ENCODE measurements at regions of chr19 and their contacts with region 1.

Region 1: DNA sequence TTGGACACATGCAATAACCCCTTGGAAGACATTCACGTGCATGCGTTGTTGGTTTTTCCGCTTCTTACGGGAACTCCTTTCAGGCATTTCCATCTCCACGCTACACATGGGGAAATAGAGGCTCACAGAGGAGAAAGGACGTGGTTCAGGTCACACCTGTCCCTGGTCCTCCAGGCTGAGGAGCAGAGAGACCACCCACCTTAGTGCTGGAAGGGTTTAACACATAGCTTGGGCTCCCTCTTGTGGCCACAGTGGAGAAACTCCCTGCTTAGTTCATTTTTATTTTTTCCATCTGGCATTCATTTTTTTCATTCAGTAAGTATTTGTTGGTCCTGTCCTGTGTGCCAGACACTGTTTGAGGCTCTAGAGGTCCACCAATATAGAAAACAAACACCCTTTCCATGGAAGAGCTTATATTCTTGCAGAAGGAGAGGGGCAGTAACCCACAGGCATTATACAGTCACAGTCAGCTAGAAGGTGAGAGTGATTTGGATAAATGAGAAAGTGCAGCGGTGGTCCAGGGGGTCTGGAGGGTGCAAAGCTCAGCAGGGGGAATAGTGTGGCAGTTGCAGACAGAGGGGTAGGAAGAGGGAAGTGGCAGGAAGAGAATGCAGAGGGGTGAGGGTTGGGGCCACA is 24.2 kb upstream of the TTYH1 start:
- DNase-seq: no peak
- ATAC-seq: peak; percentile 31
- H3K4me3 ChIP-seq: no peak overlapping the region
- H3K27ac ChIP-seq: no peak overlapping the region
- H3K4me1 ChIP-seq: peaks cover 9% of the 10 kb centered on the region
- H3K27me3 ChIP-seq: no peaks in the 10 kb centered on the region
- CTCF ChIP-seq: peak; percentile 66 to 73 (median 72)
- EP300 ChIP-seq: no peak
- POLR2A ChIP-seq: no peak
- RAD21 ChIP-seq: peak; percentile 74

Region 2: DNA sequence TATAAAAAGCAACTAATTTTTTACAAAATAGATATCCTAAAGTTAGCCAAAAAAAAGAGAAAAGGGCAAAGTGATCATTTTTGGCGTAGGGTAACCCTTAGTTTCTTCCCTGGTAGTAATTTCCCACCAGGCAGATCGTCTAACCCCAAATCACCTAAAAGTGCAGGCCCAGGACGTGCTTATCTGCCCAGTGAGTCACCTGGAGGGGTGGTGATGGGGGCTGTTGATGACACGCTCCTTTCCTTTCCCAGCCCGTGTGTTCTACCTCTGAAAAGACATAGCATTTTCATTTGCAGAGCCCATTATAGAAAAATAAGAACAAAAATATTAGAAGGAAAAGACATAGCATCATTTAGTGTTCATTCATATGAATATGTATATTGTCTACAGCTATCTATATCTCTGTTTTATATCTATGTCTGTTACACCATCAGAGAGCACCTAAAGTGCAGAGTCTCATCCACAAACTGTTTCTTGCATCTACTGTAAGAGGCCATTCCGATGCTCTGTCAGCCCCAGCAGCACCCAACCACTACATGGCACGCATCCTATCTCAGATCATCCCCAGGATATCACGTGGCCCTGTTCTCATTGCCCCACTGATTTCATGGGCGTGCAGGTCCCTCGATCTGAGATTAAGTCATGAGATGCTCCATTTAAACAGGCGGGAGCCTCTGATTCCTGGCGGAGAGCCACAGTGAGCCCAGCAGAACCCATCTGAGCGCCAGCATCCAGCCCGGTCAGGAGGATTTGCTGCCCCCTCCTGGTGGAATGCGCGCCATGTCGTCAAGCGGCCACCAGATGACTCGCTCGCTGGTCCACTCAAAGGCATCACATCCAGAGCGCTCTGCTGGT is 159.8 kb before region 1 on chr19:
- CTCF ChIA-PET with region 1: interaction called, 11 read pairs
- POLR2A ChIA-PET with region 1: no interaction called
- RAD21 ChIA-PET with region 1: no interaction called
- SMC1A ChIA-PET with region 1: interaction called, 3 read pairs
- in situ Hi-C with region 1: no loop called
- intact Hi-C with region 1: loop called (anchors 2 kb)
- DNase-seq: no peak
- ATAC-seq: peak; percentile 100
- H3K4me3 ChIP-seq: no peak overlapping the region
- H3K27ac ChIP-seq: no peak overlapping the region
- H3K4me1 ChIP-seq: no peaks in the 10 kb centered on the region
- H3K27me3 ChIP-seq: no peaks in the 10 kb centered on the region
- CTCF ChIP-seq: peak; percentile 99; a peak in 5 of 6 replicates
- EP300 ChIP-seq: no peak
- POLR2A ChIP-seq: no peak
- RAD21 ChIP-seq: peak; percentile 91

Region 3: DNA sequence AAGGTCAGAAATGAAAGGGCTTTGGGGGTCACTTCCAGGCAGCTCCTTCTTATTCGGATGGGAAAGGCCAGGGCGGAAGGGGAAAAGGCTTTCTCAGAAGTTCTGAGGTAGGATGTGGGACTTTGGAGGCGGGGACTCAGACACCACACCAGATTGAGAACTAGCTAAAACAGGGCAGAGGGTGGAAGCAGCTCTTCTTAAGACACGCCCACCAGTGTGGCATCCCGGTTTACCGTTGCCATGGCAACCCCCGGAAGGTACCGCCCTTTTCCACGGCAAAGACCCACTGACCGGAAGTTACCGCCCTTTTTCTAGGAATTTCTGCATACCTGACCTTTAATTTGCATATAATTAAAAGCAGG is 74.3 kb before region 1 on chr19:
- CTCF ChIA-PET with region 1: interaction called, 40 read pairs
- POLR2A ChIA-PET with region 1: no interaction called
- RAD21 ChIA-PET with region 1: interaction called, 3 read pairs
- SMC1A ChIA-PET with region 1: interaction called, 5 read pairs
- in situ Hi-C with region 1: no loop called
- intact Hi-C with region 1: no loop called
- DNase-seq: no peak
- ATAC-seq: no peak
- H3K4me3 ChIP-seq: no peak overlapping the region
- H3K27ac ChIP-seq: no peak overlapping the region
- H3K4me1 ChIP-seq: no peaks in the 10 kb centered on the region
- H3K27me3 ChIP-seq: no peaks in the 10 kb centered on the region
- CTCF ChIP-seq: no peak
- EP300 ChIP-seq: no peak
- POLR2A ChIP-seq: no peak
- RAD21 ChIP-seq: no peak

Region 4: GRCh38 chr19:54345938-54346386 is 45.1 kb before region 1 on chr19:
- CTCF ChIA-PET with region 1: interaction called, 34 read pairs
- POLR2A ChIA-PET with region 1: interaction called, 9 read pairs
- RAD21 ChIA-PET with region 1: interaction called, 25 read pairs
- SMC1A ChIA-PET with region 1: interaction called, 31 read pairs
- in situ Hi-C with region 1: no loop called
- intact Hi-C with region 1: loop called (anchors 5 kb)
- DNase-seq: peak; percentile 74
- ATAC-seq: peak; percentile 98
- H3K4me3 ChIP-seq: no peak overlapping the region
- H3K27ac ChIP-seq: no peak overlapping the region
- H3K4me1 ChIP-seq: peaks cover 5% of the 10 kb centered on the region
- H3K27me3 ChIP-seq: 0 out of 4 replicates have a peak, but pooled peaks cover 0 to 3% of the 10 kb centered on the region in 2 experiments
- CTCF ChIP-seq: no peak
- EP300 ChIP-seq: peak; percentile 86 to 87; a peak in 3 of 4 replicates
- POLR2A ChIP-seq: no peak
- RAD21 ChIP-seq: peak; percentile 2; the same call in 1 of the 2 replicates

Region 5: DNA sequence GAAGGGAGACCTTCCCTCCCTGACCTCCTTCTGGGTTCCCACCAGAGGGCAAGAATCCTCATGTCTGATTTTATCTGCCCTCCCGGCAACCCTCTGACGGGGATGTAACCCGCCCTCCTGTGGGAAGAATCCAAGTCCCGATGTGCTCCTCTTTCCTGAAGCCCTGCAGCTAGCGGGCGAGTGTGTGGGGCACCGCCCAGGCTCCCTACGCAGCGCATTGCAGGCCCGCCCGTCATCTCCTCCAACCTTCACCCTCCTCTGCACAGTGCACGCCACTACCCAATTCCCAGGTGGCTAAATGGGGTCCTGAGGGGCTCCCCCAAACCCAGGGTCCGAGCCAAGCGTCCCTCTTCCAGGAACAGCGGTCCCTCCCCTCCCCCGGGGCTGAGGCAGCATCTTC is 33.7 kb before region 1 on chr19:
- CTCF ChIA-PET with region 1: interaction called, 56 read pairs
- POLR2A ChIA-PET with region 1: interaction called, 3 read pairs
- RAD21 ChIA-PET with region 1: interaction called, 26 read pairs
- SMC1A ChIA-PET with region 1: interaction called, 19 read pairs
- in situ Hi-C with region 1: no loop called
- intact Hi-C with region 1: no loop called
- DNase-seq: no peak
- ATAC-seq: no peak
- H3K4me3 ChIP-seq: no peak overlapping the region
- H3K27ac ChIP-seq: no peak overlapping the region
- H3K4me1 ChIP-seq: no peaks in the 10 kb centered on the region
- H3K27me3 ChIP-seq: no peaks in the 10 kb centered on the region
- CTCF ChIP-seq: no peak
- EP300 ChIP-seq: no peak
- POLR2A ChIP-seq: no peak
- RAD21 ChIP-seq: no peak

Region 6: DNA sequence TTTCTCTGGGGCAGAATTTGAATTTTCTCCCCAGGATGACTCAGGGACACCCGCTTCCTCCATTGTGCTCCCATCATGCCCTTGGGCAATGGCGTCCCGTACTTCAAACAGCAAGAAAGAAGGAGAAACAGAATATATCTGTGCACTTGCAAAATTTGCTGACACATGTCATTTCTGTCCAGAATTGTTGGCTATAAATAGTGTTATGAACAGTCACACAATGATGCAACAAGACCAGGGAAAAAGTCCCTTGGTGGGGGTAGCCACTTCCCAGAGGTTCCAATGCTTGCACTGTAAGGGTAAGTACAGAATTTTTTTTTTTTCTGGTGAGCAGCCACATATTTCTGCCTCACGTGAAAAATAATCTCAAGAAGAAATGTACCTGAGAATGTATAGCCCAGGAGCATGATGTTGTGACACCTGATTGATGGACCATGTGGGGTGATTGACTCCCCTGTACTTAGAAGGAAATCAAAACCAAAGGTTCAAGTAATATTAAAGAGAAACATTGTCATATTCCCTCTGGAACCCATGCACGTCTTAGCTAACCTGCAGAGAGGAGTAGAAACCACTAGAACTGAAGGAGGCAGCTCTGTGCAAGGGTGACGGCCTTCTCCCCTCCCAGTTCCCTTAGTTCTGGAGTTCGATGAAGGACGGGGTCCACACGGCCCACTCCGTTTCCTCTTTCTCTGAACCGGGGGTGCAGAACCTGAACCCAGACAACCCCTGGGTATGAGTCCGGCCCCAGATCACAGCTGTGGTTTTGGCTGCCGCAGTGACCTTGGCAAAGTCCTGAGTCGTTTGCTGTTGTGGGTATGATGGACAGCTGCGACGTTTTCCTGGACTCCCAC is 17.1 kb before region 1 on chr19:
- CTCF ChIA-PET with region 1: interaction called, 68 read pairs
- POLR2A ChIA-PET with region 1: interaction called, 16 read pairs
- RAD21 ChIA-PET with region 1: interaction called, 32 read pairs
- SMC1A ChIA-PET with region 1: interaction called, 25 read pairs
- in situ Hi-C with region 1: no loop called
- intact Hi-C with region 1: no loop called
- DNase-seq: no peak
- ATAC-seq: peak; percentile 43
- H3K4me3 ChIP-seq: no peak overlapping the region
- H3K27ac ChIP-seq: no peak overlapping the region
- H3K4me1 ChIP-seq: peaks cover 11% of the 10 kb centered on the region
- H3K27me3 ChIP-seq: no peaks in the 10 kb centered on the region; a peak in 1 of 4 replicates
- CTCF ChIP-seq: no peak
- EP300 ChIP-seq: no peak; a peak in 1 of 4 replicates
- POLR2A ChIP-seq: no peak
- RAD21 ChIP-seq: no peak

Measured in GM12878 (cell line).